WTC11 (cell line): ENCODE measurements at regions of chr15 and their contacts with region 1.

Region 1: GRCh38 chr15:25710184-25710583 is 152.9 kb downstream of the ATP10A start:
- DNase-seq: peak; percentile 81
- ATAC-seq: peak; percentile 93
- H3K4me3 Mint-ChIP-seq: no peak overlapping the region
- H3K27ac Mint-ChIP-seq: no peak overlapping the region
- H3K4me1 Mint-ChIP-seq: peaks cover 6% of the 10 kb centered on the region; the same call in 1 of the 2 replicates
- H3K27me3 Mint-ChIP-seq: no peaks in the 10 kb centered on the region
- CTCF ChIP-seq: peak; percentile 52; the same call in 1 of the 2 replicates

Region 2: DNA sequence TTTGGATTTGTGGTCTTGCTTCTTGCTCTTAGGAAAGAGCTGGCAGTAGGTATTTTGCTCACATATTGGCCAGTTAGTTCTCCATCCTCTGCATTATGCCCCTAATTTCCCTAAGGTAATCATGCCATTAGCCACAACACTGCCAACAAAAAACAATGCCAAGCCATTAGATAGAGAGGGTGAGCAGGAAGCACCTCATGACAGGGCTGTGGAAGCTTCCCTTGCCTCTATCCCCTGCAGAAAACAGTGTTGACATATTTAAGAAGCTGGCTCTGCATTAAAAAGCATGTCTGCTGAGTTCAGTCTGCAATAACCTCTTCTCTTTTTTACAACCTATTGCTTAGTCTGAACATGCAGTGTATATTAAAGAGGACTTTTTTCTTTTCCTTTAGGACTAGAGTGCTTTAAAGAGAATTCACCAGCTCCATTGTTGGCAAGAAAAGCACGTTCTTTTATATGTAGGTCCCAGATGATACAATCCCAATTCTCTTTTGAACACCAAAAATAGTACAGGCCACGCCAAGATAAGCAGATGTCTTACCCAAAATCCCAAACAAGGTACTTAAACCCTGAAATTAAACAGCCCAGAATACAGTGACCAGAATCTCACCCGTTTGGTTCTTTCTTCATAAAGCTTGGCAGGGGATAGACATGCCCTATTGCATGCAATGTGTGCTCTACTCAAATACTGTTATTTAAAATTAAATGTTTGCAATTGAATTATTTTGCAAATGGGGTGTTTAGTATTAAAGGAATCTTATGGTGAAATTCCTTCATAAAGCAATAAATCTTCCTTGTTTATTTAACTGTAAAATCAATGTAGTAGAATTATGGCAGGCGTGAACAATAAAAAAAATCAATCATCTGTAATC is 177.7 kb before region 1 on chr15:
- CTCF ChIA-PET with region 1: interaction called, 16 read pairs
- POLR2A ChIA-PET with region 1: no interaction called
- DNase-seq: no peak
- ATAC-seq: no peak
- H3K4me3 Mint-ChIP-seq: no peak overlapping the region
- H3K27ac Mint-ChIP-seq: no peak overlapping the region
- H3K4me1 Mint-ChIP-seq: peaks cover 42% of the 10 kb centered on the region
- H3K27me3 Mint-ChIP-seq: no peaks in the 10 kb centered on the region
- CTCF ChIP-seq: no peak

Region 3: GRCh38 chr15:25655207-25655948 is 54.8 kb before region 1 on chr15:
- CTCF ChIA-PET with region 1: interaction called, 10 read pairs
- POLR2A ChIA-PET with region 1: no interaction called
- DNase-seq: no peak
- ATAC-seq: peak; percentile 57
- H3K4me3 Mint-ChIP-seq: no peak overlapping the region; the same call in 1 of the 2 replicates
- H3K27ac Mint-ChIP-seq: peak overlapping the region; percentile 67; the same call in 1 of the 2 replicates
- H3K4me1 Mint-ChIP-seq: peaks cover 41% of the 10 kb centered on the region
- H3K27me3 Mint-ChIP-seq: peaks cover 63% of the 10 kb centered on the region
- CTCF ChIP-seq: no peak

Region 4: DNA sequence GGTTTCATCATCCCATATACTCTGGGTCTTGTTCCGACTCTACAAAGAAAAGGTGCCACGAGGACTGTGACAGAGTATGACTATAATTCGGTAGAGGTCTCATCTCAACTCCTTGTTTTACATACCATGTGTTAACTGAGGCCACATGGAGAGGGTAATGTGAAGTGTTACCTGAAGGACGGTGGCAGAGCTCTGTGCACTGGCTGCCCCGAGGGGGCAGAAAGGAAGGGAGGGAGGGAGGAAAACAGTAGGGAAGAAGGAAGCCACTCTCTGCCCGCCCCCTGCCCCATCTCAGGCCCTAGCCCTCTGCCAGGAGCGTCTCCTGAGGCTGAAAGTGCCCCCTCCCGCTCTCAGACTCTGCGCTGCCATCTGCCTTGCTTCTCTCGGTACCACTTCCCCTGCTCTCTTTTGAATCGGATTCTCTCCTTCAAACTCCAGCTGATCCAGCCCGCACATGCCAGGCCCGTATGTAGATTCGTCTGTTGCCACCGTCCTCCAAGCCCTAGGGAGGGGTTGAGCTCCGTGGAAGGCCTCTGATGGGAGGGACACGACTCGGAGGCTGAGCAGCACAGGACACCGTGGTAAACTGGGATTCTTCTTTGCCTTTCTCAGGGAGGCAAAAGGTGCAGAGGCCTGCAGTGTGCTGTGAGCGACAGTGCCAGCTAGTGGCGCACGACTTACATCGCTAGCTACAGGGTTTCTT is 223.4 kb after region 1 on chr15:
- CTCF ChIA-PET with region 1: interaction called, 23 read pairs
- POLR2A ChIA-PET with region 1: no interaction called
- DNase-seq: peak; percentile 73
- ATAC-seq: peak; percentile 95
- H3K4me3 Mint-ChIP-seq: peak overlapping the region; percentile 71
- H3K27ac Mint-ChIP-seq: no peak overlapping the region
- H3K4me1 Mint-ChIP-seq: peaks cover 12% of the 10 kb centered on the region
- H3K27me3 Mint-ChIP-seq: no peaks in the 10 kb centered on the region
- CTCF ChIP-seq: peak; percentile 36; the same call in 1 of the 2 replicates